H1 (cell line): ENCODE measurements at regions of chr2 and their contacts with region 1.

Region 1: DNA sequence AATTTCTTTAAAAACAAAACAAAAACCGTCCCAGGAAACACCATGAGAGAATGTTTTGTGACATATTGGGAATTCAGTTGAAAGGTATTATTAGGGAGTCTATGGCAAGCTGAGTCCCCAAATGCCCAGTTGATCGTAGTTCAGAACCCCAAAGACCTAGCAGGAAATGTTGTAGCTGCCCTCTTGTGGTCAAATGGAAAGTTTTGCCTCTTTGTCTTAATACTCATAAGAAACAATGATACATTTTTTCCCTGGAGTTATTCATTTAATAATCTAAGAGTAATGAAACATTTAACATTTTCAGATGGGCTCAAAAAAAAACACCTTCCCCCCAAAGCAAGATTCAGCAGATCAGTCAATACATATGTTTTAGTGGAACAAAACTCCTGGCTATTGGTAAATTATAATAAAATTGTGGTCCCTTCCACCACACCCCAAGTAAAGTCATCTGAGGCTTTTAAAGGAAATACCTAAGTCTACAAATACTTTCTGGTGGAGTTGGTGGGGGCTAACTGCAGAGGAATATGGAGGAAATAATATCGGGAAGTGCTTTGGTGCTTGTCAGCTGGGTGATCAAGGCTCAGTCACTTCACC is 37.8 kb upstream of the EFEMP1 start:
- DNase-seq: no peak
- H3K4me3 ChIP-seq: no peak overlapping the region
- H3K27ac ChIP-seq: no peak overlapping the region
- H3K4me1 ChIP-seq: no peaks in the 10 kb centered on the region
- H3K27me3 ChIP-seq: no peaks in the 10 kb centered on the region
- CTCF ChIP-seq: peak in 2 of 3 experiments; percentile 57 to 62; a peak in 3 of 4 replicates
- EP300 ChIP-seq: no peak
- POLR2A ChIP-seq: no peak
- RAD21 ChIP-seq: peak; percentile 82 to 83

Region 2: DNA sequence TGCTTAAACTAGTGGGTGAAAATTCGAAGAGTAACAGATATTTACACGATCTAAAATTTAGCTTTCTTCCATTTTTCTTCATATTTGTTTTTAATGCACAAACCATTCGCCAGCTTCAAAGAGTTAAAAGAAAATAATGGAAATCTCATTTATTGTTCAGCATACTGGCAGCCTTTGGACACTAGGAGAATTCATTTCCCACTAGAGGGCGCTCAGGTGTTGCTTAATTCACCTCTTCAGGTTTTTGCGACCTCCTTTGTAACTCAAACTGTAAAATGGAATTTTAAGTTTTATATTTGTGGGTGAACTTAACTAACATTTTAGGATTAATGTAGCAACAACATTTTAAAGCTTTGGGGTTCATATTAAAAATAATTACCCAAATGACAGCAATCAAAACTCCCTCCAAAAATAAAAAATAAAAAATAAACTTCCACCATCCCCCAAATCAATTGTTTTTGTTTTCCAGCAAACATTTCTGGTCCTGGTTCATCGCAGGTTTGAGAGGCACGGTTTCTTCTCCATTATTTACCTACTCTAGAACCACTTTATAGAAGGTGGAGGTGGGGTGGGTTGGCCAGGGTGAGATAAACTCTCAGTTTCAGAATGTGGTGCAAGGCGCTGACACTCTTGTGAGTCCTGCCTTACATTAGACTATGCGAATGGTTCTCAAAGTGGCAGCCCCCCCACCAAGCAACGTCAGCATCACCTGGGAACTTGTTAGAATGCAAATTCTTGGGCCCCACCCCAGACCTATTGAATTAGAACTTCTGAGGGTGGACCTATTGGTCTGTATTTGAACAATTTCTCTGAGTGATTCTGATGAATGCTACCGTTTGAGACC is 243.0 kb before region 1 on chr2:
- CTCF ChIA-PET with region 1: interaction called, 113 read pairs
- POLR2A ChIA-PET with region 1: no interaction called
- DNase-seq: peak; percentile 5 to 61
- H3K4me3 ChIP-seq: no peak overlapping the region
- H3K27ac ChIP-seq: no peak overlapping the region
- H3K4me1 ChIP-seq: peaks cover 0 to 12% (median 4%) of the 10 kb centered on the region in 4 experiments; a peak in 4 of 7 replicates
- H3K27me3 ChIP-seq: no peaks in the 10 kb centered on the region
- CTCF ChIP-seq: peak in 2 of 3 experiments; percentile 67 to 74; a peak in 3 of 4 replicates
- EP300 ChIP-seq: no peak
- POLR2A ChIP-seq: no peak
- RAD21 ChIP-seq: peak; percentile 89 to 90

Region 3: DNA sequence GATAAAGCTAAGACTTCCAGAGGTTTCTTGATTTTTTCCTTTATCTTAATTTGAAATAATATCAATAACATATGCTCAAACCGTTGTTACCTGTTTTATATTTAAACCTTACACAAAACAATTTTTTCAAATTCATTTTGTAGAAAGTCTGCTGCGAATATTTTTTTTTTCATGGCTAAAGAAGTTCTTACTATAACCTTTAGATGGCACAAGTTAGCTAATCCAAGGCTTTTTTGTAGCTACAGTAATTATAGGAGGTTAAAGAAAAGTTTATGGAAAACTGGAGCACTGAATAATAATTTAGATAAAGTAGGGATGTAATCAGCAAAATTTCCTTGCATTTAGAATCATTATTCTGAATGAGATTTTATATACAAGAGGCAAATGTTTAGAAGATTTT is 189.8 kb before region 1 on chr2:
- CTCF ChIA-PET with region 1: interaction called, 43 read pairs
- POLR2A ChIA-PET with region 1: interaction called, 4 read pairs
- DNase-seq: no peak
- H3K4me3 ChIP-seq: no peak overlapping the region
- H3K27ac ChIP-seq: no peak overlapping the region
- H3K4me1 ChIP-seq: no peaks in the 10 kb centered on the region
- H3K27me3 ChIP-seq: no peaks in the 10 kb centered on the region
- CTCF ChIP-seq: peak in 2 of 3 experiments; percentile 20 to 35; a peak in 2 of 4 replicates
- EP300 ChIP-seq: no peak
- POLR2A ChIP-seq: no peak
- RAD21 ChIP-seq: peak in 1 of 2 experiments; percentile 66; a peak in 3 of 4 replicates

Region 4: DNA sequence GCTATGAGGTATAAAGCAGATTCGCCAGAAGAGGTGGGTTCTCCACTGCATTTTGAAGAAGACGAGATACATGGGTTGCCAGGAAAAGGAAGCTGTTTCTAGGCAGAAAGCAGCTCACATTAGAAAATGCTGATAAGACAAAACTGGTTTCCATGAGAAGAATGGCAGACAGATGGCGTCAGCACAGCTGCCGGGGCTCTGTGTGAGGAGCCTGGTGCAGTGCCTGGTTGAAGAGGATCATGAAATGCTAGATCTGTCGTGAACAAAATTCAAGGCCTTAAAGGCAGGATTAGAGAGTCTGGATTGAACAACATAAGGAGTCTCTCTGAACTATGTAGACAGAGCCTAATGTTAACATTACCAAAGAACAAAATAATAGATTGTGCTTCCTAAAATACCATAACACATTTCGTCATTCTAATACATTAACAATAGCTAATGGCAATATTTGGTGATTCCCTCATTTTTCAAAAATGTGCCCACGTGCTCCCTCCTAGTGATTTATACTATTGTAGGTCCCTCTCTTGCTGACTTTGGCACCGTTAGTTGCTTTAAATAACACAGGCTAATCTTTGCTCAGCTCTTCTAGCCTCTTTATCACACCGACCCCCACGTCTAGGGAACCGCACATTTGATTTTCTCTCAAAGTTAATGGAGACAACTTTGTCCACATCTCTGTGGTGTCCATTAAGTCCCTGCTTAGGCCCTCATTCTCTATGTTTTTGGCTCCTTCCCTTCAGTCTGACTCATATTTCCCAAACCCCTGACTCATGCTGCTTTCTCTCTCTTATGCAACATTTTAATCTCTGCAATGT is 76.1 kb before region 1 on chr2:
- CTCF ChIA-PET with region 1: interaction called, 11 read pairs
- POLR2A ChIA-PET with region 1: no interaction called
- DNase-seq: no peak
- H3K4me3 ChIP-seq: no peak overlapping the region
- H3K27ac ChIP-seq: no peak overlapping the region
- H3K4me1 ChIP-seq: peaks cover 0 to 6% (median 0%) of the 10 kb centered on the region in 4 experiments; a peak in 1 of 7 replicates
- H3K27me3 ChIP-seq: no peaks in the 10 kb centered on the region
- CTCF ChIP-seq: peak in 1 of 3 experiments; percentile 5; a peak in 1 of 4 replicates
- EP300 ChIP-seq: no peak
- POLR2A ChIP-seq: no peak
- RAD21 ChIP-seq: 0 out of 4 replicates have a peak, but pooled peaks of 1 of the 2 experiments have one; percentile 20

Region 5: DNA sequence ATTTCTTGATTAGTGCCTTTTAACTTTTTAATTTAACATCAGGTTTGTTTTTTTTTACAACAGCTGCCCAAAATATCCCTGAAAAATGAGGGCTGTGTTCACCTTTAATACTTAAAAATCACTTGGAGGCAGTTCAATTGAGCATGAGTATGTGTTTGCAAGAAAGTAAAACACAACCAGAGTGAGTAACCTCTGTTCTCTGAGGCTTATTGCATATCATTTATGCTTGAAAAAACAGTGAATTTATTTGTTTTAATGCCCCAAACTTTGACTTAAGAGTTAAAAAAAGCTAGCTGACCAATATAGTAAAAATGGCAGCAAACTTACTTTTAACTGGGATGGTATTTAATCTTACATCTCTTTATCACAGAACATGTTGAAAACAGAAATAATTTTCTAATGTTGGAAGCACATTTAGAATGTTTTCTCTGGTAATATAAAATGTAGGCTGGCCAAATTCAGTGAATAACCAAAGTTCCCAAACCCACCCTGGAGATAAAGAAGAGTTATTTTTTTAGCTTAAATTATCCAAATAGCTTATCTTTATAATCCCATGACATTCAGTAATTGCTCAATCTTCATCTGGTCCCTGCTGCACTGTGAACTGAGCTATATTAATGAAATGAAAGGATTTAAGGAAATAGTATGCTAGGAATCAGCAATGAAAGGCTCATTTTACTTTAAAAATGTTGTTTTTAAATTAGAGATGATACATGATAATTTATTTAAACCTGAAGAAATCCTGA is 13.1 kb before region 1 on chr2:
- CTCF ChIA-PET with region 1: interaction called, 16 read pairs
- POLR2A ChIA-PET with region 1: no interaction called
- DNase-seq: no peak
- H3K4me3 ChIP-seq: no peak overlapping the region
- H3K27ac ChIP-seq: no peak overlapping the region
- H3K4me1 ChIP-seq: no peaks in the 10 kb centered on the region
- H3K27me3 ChIP-seq: no peaks in the 10 kb centered on the region
- CTCF ChIP-seq: no peak
- EP300 ChIP-seq: no peak
- POLR2A ChIP-seq: no peak
- RAD21 ChIP-seq: no peak

Region 6: DNA sequence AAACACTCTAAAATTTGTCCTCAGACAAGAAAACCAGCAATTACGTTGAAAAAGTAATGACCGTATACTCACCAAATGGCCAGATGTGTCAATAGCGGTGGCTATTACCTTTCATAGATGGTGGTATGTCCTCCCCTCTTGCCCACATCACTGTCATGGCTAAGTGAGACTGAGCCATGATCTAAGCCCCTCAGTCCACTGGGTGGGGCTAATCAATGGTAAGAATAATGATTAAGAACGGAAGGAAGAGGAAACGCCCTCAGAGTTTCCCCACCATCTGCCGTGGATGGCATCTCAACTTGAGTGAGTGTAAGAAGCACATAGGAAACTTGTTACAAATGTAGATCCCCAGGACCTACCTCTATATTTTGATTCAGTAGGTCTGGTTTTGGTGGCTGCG is 28.0 kb after region 1 on chr2:
- CTCF ChIA-PET with region 1: interaction called, 16 read pairs
- POLR2A ChIA-PET with region 1: no interaction called
- DNase-seq: no peak
- H3K4me3 ChIP-seq: no peak overlapping the region
- H3K27ac ChIP-seq: no peak overlapping the region
- H3K4me1 ChIP-seq: peaks cover 0 to 3% (median 0%) of the 10 kb centered on the region in 4 experiments; a peak in 1 of 7 replicates
- H3K27me3 ChIP-seq: no peaks in the 10 kb centered on the region
- CTCF ChIP-seq: no peak
- EP300 ChIP-seq: no peak
- POLR2A ChIP-seq: no peak
- RAD21 ChIP-seq: 0 out of 4 replicates have a peak, but pooled peaks of 1 of the 2 experiments have one; percentile 2

Region 7: GRCh38 chr2:56009758-56010458 is 48.5 kb after region 1 on chr2:
- CTCF ChIA-PET with region 1: interaction called, 12 read pairs
- POLR2A ChIA-PET with region 1: no interaction called
- DNase-seq: no peak
- H3K4me3 ChIP-seq: no peak overlapping the region
- H3K27ac ChIP-seq: no peak overlapping the region
- H3K4me1 ChIP-seq: peaks cover 4 to 12% (median 7%) of the 10 kb centered on the region in 4 experiments; a peak in 6 of 7 replicates
- H3K27me3 ChIP-seq: no peaks in the 10 kb centered on the region
- CTCF ChIP-seq: peak in 1 of 3 experiments; percentile 42; a peak in 2 of 4 replicates
- EP300 ChIP-seq: no peak
- POLR2A ChIP-seq: no peak
- RAD21 ChIP-seq: peak; percentile 62 to 72

Region 8: GRCh38 chr2:56183643-56184499 is 222.5 kb after region 1 on chr2 and contains the start of gene CCDC85A:
- CTCF ChIA-PET with region 1: no interaction called
- POLR2A ChIA-PET with region 1: no interaction called
- DNase-seq: peak; percentile 36 to 93
- H3K4me3 ChIP-seq: peak within 1 kb of the TSS; percentile 33 to 70 (median 46)
- H3K27ac ChIP-seq: no peak within 1 kb of the TSS
- H3K4me1 ChIP-seq: peaks cover 3 to 10% (median 7%) of the 10 kb centered on the region in 4 experiments
- H3K27me3 ChIP-seq: peaks cover 56 to 90% (median 85%) of the 10 kb centered on the region in 4 experiments
- CTCF ChIP-seq: peak; percentile 75 to 85 (median 83)
- EP300 ChIP-seq: no peak
- POLR2A ChIP-seq: no peak
- RAD21 ChIP-seq: peak; percentile 76 to 81
- total RNA-seq, gene CCDC85A: 0.48 TPM in 1 of 2 replicates, not detected in the other